HCT116 (cell line): ENCODE measurements at regions of chr4 and their contacts with region 1.

Region 1: DNA sequence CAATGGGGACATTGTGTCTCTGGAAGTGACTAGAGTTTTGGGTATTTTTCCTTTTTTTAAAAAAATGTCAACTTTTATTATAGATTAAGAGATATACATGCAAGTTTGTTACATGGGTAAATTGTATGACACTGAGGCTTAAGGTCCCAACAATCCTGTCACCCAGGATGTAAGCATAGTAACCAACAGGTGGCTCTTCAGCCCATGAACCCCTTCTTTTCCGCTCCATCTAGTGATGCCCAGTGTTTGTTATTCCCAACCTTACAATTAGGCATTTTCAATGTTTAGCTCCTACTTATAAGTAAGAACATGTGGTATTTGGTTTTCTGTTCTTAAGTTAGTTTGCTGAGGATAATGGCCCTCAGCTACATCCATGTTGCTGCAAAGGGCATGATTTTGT is 102.7 kb downstream of the GRID2 start:
- DNase-seq: no peak
- ATAC-seq: no peak
- H3K4me3 ChIP-seq: no peak overlapping the region
- H3K27ac ChIP-seq: no peak overlapping the region
- H3K4me1 ChIP-seq: no peaks in the 10 kb centered on the region
- H3K27me3 ChIP-seq: no peaks in the 10 kb centered on the region
- CTCF ChIP-seq: no peak
- POLR2A ChIP-seq: no peak
- RAD21 ChIP-seq: peak; percentile 20; the same call in 1 of the 2 replicates

Region 2: GRCh38 chr4:93199492-93199891 is 793.0 kb after region 1 on chr4:
- CTCF ChIA-PET with region 1: no interaction called
- POLR2A ChIA-PET with region 1: no interaction called
- RAD21 ChIA-PET with region 1: no interaction called
- intact Hi-C with region 1: loop called (anchors 10 kb)
- DNase-seq: peak; percentile 45
- ATAC-seq: peak; percentile 93
- H3K4me3 ChIP-seq: no peak overlapping the region
- H3K27ac ChIP-seq: no peak overlapping the region
- H3K4me1 ChIP-seq: no peaks in the 10 kb centered on the region
- H3K27me3 ChIP-seq: no peaks in the 10 kb centered on the region
- CTCF ChIP-seq: peak; percentile 42 to 59 (median 49); a peak in 5 of 6 replicates
- POLR2A ChIP-seq: no peak
- RAD21 ChIP-seq: peak; percentile 73